ENCODE measurements at regions of chr12 and their contacts with region 1.

Region 1: DNA sequence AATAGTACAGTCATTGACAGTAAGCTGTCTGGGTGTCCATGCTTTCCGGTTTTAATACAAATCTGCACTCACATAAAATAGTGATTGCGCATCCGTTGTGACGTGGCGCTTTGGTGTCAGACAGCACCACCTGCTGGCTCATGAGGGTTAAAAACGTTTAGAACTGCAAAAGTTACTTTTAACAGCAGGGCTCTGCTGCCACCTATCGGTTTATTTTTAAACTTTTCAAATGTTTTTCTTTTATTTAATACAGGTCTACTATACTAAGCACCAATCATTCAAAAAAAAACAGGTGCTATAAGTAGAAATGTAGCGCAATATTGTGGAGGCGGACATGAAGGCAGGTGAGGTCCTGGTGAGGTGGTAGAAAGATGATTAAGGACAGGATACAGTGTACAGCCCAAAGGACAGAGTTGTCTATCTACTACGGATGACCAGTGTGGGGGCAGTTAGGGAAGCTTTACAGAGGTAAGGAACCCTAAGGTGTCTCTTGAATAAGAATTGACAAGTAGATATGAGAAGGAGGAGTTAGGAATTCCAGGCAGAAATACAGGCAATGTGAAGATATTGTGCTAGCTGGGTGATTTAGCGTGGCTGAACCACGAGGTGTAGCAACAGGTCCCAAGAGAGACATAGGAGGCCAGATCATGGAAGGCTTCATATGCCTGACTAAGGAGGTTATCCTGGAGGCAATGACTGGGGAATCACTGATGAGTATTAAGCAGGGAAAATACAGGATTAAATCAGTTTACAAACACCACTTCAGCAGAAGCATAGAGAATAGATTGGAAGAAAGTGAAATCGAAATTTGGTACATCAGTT is 91.5 kb upstream of the PRB2 start:
- DNase-seq: peak; percentile 87 to 95 (median 91)
- H3K4me3 ChIP-seq: no peak overlapping the region
- H3K27ac ChIP-seq: no peak overlapping the region
- H3K4me1 ChIP-seq: no peaks in the 10 kb centered on the region
- H3K27me3 ChIP-seq: no peaks in the 10 kb centered on the region

Region 2: GRCh38 chr12:10771132-10771733 is 715.6 kb before region 1 on chr12:
- CTCF ChIA-PET with region 1: interaction called, 56 read pairs
- POLR2A ChIA-PET with region 1: no interaction called
- DNase-seq: peak; percentile 46 to 76 (median 65)
- H3K4me3 ChIP-seq: no peak overlapping the region
- H3K27ac ChIP-seq: no peak overlapping the region
- H3K4me1 ChIP-seq: no peaks in the 10 kb centered on the region
- H3K27me3 ChIP-seq: peaks cover 0 to 4% (median 2%) of the 10 kb centered on the region in 5 experiments

Region 3: DNA sequence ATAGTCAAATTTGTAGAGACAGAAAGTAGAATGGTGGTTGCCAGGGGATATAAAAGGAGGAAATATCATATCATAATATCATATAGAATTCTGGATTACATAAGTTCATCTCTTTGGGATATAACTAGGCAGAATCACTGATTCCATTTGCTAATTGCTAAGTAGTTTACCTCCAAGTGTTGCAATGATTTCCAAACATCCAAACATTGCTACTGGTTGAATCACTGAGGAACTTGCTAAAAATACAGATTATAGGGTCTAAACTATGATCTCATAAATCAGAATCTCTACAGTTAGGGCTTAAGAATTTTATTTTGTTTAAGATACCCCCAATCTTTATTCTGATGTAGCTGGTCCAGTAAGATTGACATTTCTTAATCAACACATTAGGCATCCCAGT is 284.0 kb before region 1 on chr12:
- CTCF ChIA-PET with region 1: interaction called, 12 read pairs
- POLR2A ChIA-PET with region 1: no interaction called
- DNase-seq: no peak
- H3K4me3 ChIP-seq: no peak overlapping the region
- H3K27ac ChIP-seq: no peak overlapping the region
- H3K4me1 ChIP-seq: no peaks in the 10 kb centered on the region
- H3K27me3 ChIP-seq: no peaks in the 10 kb centered on the region

Region 4: GRCh38 chr12:11228296-11228879 is 258.4 kb before region 1 on chr12:
- CTCF ChIA-PET with region 1: interaction called, 48 read pairs
- POLR2A ChIA-PET with region 1: no interaction called
- DNase-seq: peak; percentile 13 to 69 (median 60)
- H3K4me3 ChIP-seq: no peak overlapping the region
- H3K27ac ChIP-seq: no peak overlapping the region
- H3K4me1 ChIP-seq: no peaks in the 10 kb centered on the region
- H3K27me3 ChIP-seq: no peaks in the 10 kb centered on the region

Region 5: DNA sequence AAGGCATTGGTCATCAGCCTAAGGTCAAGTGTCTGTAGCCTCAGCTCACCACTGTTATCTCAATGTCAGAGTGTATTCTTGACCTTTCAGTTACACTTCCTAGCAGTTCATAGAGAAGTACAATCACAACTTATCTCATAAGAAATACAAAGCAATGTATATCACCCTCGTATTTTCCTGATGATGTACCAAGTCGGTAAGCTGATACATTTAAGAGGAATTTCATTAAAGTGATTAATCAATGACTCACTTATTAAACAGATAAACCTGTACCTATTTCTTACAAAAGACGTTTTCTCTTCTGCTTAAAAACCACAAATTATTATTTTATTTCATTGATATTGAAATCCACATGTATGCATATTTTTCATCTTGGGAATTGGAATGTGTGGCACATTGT is 213.4 kb before region 1 on chr12:
- CTCF ChIA-PET with region 1: no interaction called
- POLR2A ChIA-PET with region 1: no interaction called
- DNase-seq: no peak
- H3K4me3 ChIP-seq: no peak overlapping the region
- H3K27ac ChIP-seq: no peak overlapping the region
- H3K4me1 ChIP-seq: no peaks in the 10 kb centered on the region
- H3K27me3 ChIP-seq: no peaks in the 10 kb centered on the region

Measured in common myeloid progenitor, CD34-positive (primary cell).